Right lobe of liver (tissue), 6 donors: ENCODE measurements at regions of chr7 and their contacts with region 1.

Region 1: GRCh38 chr7:12315049-12315448 is 88.6 kb downstream of the VWDE start:
- DNase-seq: no peak
- ATAC-seq: peak in 1 of 4 donors; percentile 36
- H3K4me3 ChIP-seq: no peak overlapping the region
- H3K27ac ChIP-seq: no peak overlapping the region
- H3K4me1 ChIP-seq: no peaks in the 10 kb centered on the region
- H3K27me3 ChIP-seq: no peaks in the 10 kb centered on the region
- CTCF ChIP-seq: no peak
- POLR2A ChIP-seq: no peak

Region 2: DNA sequence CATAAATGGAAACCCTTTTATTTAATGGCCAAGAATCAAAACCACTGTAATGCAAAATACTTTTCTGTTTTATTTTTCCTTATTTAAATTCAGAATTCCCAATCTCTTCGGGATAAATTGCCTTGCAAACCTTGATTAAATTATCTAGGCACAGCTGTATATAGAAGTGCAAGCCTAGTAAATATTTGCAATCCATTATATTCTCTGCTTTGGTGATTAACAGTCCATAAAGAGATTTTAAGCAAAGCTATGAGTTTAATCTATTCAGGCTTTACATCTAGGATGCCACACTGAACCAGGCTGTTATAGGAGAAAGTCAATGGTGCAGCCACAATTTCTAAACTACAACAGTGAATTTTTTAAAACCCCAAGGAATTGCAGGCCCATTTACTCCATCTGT is 439.4 kb before region 1 on chr7:
- intact Hi-C with region 1: no loop called
- DNase-seq: no peak
- ATAC-seq: no peak
- H3K4me3 ChIP-seq: no peak overlapping the region
- H3K27ac ChIP-seq: no peak overlapping the region
- H3K4me1 ChIP-seq: no peaks in the 10 kb centered on the region
- H3K27me3 ChIP-seq: no peaks in the 10 kb centered on the region
- CTCF ChIP-seq: no peak
- POLR2A ChIP-seq: no peak

Region 3: GRCh38 chr7:12074887-12075286 is 240.2 kb before region 1 on chr7:
- intact Hi-C with region 1: loop called in 1 of 2 experiments (anchors 5 kb)
- DNase-seq: no peak
- ATAC-seq: no peak
- H3K4me3 ChIP-seq: no peak overlapping the region
- H3K27ac ChIP-seq: no peak overlapping the region
- H3K4me1 ChIP-seq: no peaks in the 10 kb centered on the region
- H3K27me3 ChIP-seq: no peaks in the 10 kb centered on the region
- CTCF ChIP-seq: no peak
- POLR2A ChIP-seq: no peak

Region 4: DNA sequence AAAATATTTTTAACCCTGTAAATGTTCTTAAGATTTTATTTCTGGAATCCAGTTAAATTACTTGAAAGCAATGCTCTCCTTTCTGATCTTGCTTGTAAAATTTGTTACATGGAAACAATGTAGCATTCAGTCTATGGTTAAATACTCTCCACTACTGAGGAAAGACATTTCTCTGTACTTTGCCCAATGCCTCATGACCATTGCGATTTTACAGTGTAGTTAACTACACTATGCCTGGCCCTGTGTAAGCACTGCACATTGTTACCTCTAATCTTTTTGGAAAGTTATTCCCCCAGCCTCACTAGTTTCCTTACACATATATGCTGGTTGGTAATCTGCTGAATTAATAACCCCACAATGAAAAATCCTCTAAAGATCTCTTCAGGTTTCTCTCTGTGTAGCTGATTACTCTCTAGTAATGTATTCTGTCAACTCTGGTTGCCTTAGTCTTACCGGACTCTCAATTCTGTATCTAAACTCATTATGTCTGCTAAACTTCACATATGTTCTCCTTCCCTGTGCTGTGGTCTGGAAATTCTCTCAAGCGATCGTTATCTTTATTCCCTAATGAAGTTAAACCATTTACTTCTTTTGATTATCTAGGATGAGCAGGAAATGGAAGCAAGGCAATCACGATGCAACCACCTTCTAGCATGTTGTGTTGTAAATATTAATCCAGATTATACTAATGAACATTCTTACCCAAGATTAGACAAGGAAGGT is 162.7 kb before region 1 on chr7:
- intact Hi-C with region 1: no loop called
- DNase-seq: no peak
- ATAC-seq: no peak
- H3K4me3 ChIP-seq: no peak overlapping the region
- H3K27ac ChIP-seq: no peak overlapping the region
- H3K4me1 ChIP-seq: no peaks in the 10 kb centered on the region
- H3K27me3 ChIP-seq: no peaks in the 10 kb centered on the region
- CTCF ChIP-seq: no peak
- POLR2A ChIP-seq: no peak